Activated T-helper 1 cell treated with anti-CD3 and anti-CD28 coated beads, Interleukin-12 subunit alpha, Interleukin-12 subunit beta, Interleukin-2, Interleukin-4 antibody, amounts not matched to agents 30 ng/mL and 10 ng/mL and 1 ng/mL, durations not matched to agents 14 hours and 24 hours and 36 hours (primary cell): ENCODE measurements at regions of chr2 and their contacts with region 1.

Region 1: GRCh38 chr2:68467077-68467960 is at the starts of genes APLF and FBXO48:
- DNase-seq: peak; percentile 97
- H3K4me3 Mint-ChIP-seq: peak within 1 kb of the TSS; percentile 97
- H3K27ac Mint-ChIP-seq: peak within 1 kb of the TSS; percentile 91
- H3K4me1 Mint-ChIP-seq: peaks cover 48% of the 10 kb centered on the region
- H3K27me3 Mint-ChIP-seq: no peaks in the 10 kb centered on the region
- total RNA-seq, gene APLF: 2.3 and 3.0 TPM in 2 replicates
- total RNA-seq, gene FBXO48: 1.3 and 1.4 TPM in 2 replicates

Region 2: DNA sequence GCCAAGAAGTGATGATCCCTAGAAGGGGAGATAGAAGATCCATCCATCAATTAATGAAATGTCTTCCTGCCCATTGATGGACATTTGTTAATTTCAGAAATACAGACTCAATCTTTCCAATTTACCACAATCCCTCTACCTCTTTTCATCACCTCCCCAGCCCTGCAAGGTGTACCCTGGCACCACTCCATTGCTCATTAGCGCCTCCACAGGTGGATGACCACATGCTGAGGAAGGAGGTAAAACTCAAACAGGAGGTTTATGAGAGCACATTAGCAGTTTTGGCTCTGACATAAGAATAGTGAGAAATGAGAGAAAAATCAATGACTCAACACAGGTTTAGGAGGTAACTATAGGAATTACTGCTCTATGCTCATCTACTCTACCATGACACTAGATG is 612.5 kb before region 1 on chr2:
- intact Hi-C with region 1: no loop called
- DNase-seq: no peak
- H3K4me3 Mint-ChIP-seq: no peak overlapping the region
- H3K27ac Mint-ChIP-seq: no peak overlapping the region
- H3K4me1 Mint-ChIP-seq: no peaks in the 10 kb centered on the region
- H3K27me3 Mint-ChIP-seq: no peaks in the 10 kb centered on the region

Region 3: DNA sequence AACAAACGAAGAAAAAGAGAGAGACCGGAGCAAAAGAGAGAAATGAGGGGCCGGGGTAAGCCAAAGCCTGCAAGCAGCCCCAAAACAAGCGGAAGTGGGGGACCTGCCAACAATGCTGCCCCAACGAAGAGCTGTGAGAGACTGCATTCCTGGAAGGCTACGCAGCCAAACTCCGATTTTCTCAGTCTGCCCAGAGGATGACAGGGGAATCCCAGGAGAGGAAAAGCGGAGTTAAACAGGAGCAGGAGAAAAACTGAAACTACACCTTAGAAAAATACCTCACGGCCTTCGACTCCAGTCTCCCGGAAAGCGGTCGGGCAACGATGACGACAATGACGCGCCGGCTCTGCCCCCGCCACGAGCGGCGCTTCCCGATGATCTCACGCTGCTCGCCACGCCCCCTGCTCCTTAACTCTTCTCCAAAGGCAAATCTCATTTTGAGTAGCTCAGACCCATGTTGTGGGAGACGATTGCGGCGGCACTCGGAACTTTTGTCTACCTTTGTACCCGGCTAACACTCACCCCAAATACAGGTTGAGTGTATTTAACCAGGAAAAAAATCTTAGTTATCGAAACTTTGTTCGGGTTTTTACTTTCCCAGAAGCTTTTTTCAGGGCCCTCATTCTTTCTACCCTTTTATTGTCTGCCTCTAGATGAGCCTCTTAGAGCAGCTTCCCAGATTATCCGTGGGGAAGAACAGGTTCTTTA is 404.5 kb before region 1 on chr2 and contains the start of gene C1D:
- intact Hi-C with region 1: loop called (anchors 1 kb)
- DNase-seq: peak; percentile 90
- H3K4me3 Mint-ChIP-seq: peak within 1 kb of the TSS; percentile 93
- H3K27ac Mint-ChIP-seq: peak within 1 kb of the TSS; percentile 96
- H3K4me1 Mint-ChIP-seq: peaks cover 35% of the 10 kb centered on the region
- H3K27me3 Mint-ChIP-seq: peaks cover 10% of the 10 kb centered on the region
- total RNA-seq, gene C1D: 28.3 and 31.0 TPM in 2 replicates

Region 4: GRCh38 chr2:68345129-68345875 is 122.0 kb before region 1 on chr2:
- intact Hi-C with region 1: no loop called
- DNase-seq: no peak
- H3K4me3 Mint-ChIP-seq: no peak overlapping the region
- H3K27ac Mint-ChIP-seq: no peak overlapping the region
- H3K4me1 Mint-ChIP-seq: no peaks in the 10 kb centered on the region
- H3K27me3 Mint-ChIP-seq: peaks cover 48% of the 10 kb centered on the region

Region 5: DNA sequence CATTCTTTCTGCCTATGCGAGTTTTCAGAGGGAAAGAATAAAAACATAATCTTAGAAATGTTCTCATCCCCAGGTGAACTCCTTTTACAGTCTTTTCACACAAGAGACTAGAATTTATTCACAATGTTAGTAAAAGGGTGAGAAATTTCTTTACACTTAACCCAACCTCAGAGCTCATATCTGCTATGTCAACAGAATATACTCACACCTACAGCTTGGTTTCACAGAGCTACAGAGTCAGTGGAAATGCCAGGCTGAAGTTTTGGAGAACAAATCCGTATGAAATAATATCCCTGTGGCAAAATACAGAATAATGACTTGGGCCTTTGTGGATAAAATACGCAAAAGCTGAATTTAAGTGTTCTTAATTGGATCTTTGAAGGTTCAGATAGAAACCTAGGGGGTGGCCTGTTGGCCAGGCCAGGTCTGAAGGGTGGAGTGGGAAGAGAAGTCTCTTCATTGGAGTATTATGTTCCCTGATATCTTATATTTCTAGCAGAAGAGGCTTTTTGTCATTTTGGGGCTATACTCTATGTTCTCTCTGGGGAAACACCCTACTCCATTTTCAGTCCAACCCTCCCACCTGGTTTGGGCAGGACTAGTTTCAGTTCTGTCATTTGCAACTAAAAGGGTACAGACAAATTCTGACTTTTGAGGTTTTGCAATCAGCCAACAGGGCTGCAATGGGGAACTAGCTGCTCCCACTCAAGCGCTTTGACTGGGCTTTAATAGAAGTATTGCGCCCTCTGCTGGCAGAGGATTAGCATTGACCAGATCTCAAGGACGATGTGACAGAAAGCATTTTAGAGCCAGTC is 25.9 kb before region 1 on chr2:
- intact Hi-C with region 1: loop called (anchors 1 kb)
- DNase-seq: peak; percentile 76
- H3K4me3 Mint-ChIP-seq: peak overlapping the region; percentile 55
- H3K27ac Mint-ChIP-seq: peak overlapping the region; percentile 88
- H3K4me1 Mint-ChIP-seq: peaks cover 31% of the 10 kb centered on the region
- H3K27me3 Mint-ChIP-seq: peaks cover 10% of the 10 kb centered on the region

Region 6: DNA sequence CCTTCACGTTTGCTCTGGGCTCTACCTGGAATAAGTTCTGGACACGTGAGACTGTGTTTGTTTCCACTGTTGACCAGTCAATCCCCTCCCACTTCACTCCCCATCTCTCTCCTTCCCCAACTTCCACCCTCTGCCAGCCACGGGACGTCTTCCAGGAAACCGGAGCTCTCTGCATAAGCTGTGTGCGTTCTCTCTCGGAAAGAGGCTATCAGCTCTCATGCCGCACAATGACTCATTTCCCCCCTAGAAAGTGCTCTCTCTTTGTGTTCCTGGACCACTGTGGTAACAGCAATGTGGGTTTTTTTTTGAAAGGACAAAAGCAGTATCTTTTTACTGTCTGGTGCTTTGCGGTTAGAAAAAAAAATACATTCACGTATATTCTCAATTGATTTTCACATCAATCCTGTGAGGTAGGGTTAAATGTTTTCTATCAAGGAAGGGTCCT is 186.2 kb after region 1 on chr2:
- intact Hi-C with region 1: loop called (anchors 1 kb)
- DNase-seq: peak; percentile 51
- H3K4me3 Mint-ChIP-seq: peak overlapping the region; percentile 8
- H3K27ac Mint-ChIP-seq: peak overlapping the region; percentile 64
- H3K4me1 Mint-ChIP-seq: peaks cover 47% of the 10 kb centered on the region
- H3K27me3 Mint-ChIP-seq: peaks cover 26% of the 10 kb centered on the region

Region 7: DNA sequence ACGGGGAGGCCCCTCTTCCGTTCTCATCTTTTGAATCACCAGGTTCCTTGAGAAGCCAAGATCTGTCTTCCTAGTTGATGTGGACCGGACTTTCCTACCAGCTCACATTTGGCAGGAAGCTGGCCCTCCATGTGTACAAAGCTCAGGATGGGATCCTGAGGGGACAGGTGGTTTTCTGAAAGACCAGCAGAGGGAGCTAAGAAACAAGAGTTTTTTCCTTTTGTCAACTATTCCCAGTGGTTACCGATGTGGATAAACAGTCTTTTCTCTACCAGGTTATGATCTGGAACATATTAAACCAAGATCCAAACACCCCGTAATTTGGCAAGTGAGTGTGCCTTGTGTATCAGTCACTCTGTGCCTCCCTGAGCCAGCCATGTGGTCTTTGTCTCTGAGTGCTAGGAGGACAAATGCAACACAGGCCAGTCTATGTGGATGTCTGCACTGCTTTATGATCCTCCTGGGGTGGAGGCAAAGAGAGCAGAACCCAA is 242.1 kb after region 1 on chr2:
- intact Hi-C with region 1: no loop called
- DNase-seq: no peak
- H3K4me3 Mint-ChIP-seq: no peak overlapping the region
- H3K27ac Mint-ChIP-seq: no peak overlapping the region
- H3K4me1 Mint-ChIP-seq: peaks cover 36% of the 10 kb centered on the region
- H3K27me3 Mint-ChIP-seq: peaks cover 6% of the 10 kb centered on the region

Region 8: GRCh38 chr2:68766376-68766845 is 299.1 kb after region 1 on chr2:
- intact Hi-C with region 1: loop called (anchors 2 kb)
- DNase-seq: peak; percentile 75
- H3K4me3 Mint-ChIP-seq: peak overlapping the region; percentile 65
- H3K27ac Mint-ChIP-seq: peak overlapping the region; percentile 92
- H3K4me1 Mint-ChIP-seq: peaks cover 96% of the 10 kb centered on the region
- H3K27me3 Mint-ChIP-seq: no peaks in the 10 kb centered on the region

Region 9: DNA sequence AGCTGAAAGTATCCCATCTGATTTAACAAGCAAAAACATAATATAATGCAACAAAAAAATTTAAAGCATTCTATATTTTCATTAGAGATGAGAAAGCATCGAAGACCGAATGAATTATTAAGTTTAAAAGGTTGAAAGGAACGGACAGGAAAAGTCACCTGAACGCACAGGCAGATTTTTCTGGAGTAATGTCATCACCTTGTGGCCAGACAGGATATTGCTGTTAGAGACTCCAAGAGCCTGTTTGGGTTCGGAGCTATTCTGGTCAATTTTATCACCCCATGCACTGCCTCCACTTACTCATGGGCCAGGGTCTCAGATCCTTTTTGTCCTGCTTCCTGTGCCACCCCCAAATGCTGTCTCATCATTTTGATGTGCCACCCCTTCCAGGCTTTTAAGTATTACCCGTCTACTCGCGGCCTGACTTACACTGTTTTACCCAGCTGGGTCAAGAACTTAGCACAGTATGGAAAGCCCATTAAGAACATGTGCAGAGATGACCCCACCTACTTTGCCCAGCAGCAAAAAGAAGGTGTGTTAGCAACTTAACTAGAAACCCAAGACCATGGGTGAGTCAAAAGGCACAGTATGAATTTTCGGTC is 458.1 kb after region 1 on chr2:
- intact Hi-C with region 1: loop called (anchors 1 kb)
- DNase-seq: peak; percentile 34
- H3K4me3 Mint-ChIP-seq: no peak overlapping the region
- H3K27ac Mint-ChIP-seq: no peak overlapping the region
- H3K4me1 Mint-ChIP-seq: peaks cover 12% of the 10 kb centered on the region
- H3K27me3 Mint-ChIP-seq: peaks cover 18% of the 10 kb centered on the region